Activated naive CD4-positive, alpha-beta T cell treated with anti-CD3 and anti-CD28 coated beads for 36 hours (primary cell): ENCODE measurements at regions of chr5 and their contacts with region 1.

Region 1: GRCh38 chr5:116076496-116076895 is 8.3 kb upstream of the COMMD10 start:
- DNase-seq: peak; percentile 41
- H3K4me3 Mint-ChIP-seq: no peak overlapping the region
- H3K27ac Mint-ChIP-seq: peak overlapping the region; percentile 17
- H3K4me1 Mint-ChIP-seq: peaks cover 25% of the 10 kb centered on the region
- H3K27me3 Mint-ChIP-seq: peaks cover 3% of the 10 kb centered on the region

Region 2: GRCh38 chr5:115735108-115735998 is 341.1 kb before region 1 on chr5:
- CTCF ChIA-PET with region 1: no interaction called
- intact Hi-C with region 1: loop called (anchors 5 kb)
- DNase-seq: no peak
- H3K4me3 Mint-ChIP-seq: no peak overlapping the region
- H3K27ac Mint-ChIP-seq: peak overlapping the region; percentile 39
- H3K4me1 Mint-ChIP-seq: peaks cover 27% of the 10 kb centered on the region
- H3K27me3 Mint-ChIP-seq: peaks cover 41% of the 10 kb centered on the region

Region 3: GRCh38 chr5:116176124-116176523 is 99.6 kb after region 1 on chr5:
- CTCF ChIA-PET with region 1: no interaction called
- intact Hi-C with region 1: no loop called
- DNase-seq: no peak
- H3K4me3 Mint-ChIP-seq: no peak overlapping the region
- H3K27ac Mint-ChIP-seq: no peak overlapping the region
- H3K4me1 Mint-ChIP-seq: peaks cover 4% of the 10 kb centered on the region
- H3K27me3 Mint-ChIP-seq: no peaks in the 10 kb centered on the region

Region 4: DNA sequence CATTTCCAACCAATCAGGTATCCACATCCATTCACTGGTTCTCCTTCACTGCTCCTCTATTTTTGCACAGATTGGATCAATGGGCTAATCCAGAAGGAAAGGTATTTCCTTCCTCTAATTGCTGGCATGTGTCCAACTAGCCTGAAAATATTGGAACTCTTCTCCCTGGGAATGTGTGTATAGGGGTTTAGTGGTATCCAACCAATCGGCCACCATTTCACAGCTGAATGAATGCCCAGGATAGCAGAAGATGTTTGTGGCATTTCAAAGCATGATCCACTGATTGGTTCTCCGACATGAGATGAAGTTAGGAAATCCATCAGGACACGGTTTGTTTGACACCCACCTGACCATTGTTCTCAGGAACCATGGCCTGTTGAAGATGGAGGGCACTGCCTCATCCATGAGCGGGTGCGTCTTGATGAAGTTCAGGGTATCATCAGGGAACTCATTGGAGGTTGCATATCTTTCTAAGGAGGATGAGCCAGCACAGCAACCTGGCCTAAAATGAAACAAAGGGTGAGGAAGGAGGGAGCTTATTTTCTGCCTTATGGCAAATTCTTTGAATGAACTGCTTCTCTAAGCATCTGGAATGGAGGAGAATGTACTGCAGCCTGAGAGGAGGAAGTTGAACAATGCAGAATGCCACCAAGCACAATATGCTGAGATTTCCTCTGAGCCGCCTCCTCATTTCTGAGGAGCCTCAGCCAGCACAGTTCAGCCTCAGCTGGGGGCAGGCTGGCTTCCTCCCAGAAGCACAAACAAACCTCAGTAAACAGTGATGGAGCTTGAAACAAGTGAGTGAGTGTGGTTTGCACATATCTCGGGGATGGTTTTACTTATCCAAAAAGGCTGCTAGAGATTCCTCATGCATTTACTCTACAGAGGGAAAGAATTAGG is 403.5 kb after region 1 on chr5:
- CTCF ChIA-PET with region 1: no interaction called
- intact Hi-C with region 1: no loop called
- DNase-seq: no peak
- H3K4me3 Mint-ChIP-seq: no peak overlapping the region
- H3K27ac Mint-ChIP-seq: no peak overlapping the region
- H3K4me1 Mint-ChIP-seq: no peaks in the 10 kb centered on the region
- H3K27me3 Mint-ChIP-seq: no peaks in the 10 kb centered on the region